Prostate gland (tissue), 2 donors: ENCODE measurements at regions of chr9 and their contacts with region 1.

Region 1: DNA sequence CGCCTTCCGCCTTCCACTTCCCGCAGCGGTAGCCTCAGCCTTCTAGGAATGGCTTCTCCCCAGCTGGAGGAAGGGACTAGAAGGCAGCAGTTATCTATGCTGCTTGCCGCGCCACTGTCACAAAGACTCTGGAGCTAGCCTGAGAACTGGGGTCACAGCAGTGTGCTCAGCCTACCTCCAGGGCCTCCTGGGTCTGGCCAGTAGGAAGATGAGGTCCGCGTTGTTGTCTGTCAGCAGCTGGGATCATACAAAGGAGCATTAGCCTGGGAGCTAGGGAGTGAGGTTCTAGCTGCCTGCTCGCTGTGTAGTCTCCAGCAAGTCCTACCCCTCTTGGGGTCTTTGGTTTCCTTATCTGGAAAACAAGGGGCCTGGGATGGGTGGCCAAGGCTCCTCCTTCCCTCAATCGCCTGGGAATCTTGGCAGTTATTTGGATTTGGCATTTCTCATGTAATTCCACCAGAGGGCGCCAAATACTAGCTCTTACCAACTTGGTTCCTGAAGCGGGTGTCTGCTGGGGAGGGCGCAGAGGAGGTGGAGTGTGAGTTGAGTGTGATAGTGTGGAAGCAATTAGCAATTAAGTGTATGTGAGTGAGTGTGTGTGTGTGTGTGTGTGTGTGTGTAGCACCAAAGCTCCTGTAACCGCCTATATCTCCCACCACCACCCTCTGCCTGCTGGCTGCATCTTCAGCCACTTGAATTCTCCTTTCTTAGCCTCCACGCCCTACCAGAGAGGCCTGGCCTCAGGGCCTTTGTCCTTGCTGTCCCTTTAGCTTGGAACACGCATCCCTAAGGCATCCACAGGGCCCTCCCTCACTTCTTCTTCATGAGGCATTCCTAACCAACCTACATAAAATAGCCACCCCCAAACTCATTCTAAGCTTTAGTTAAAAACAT is 97.1 kb downstream of the ENTREP1 start:
- DNase-seq: peak; percentile 58
- H3K4me3 ChIP-seq: no peak overlapping the region
- H3K27ac ChIP-seq: no peak overlapping the region
- H3K4me1 ChIP-seq: no peaks in the 10 kb centered on the region
- H3K27me3 ChIP-seq: no peaks in the 10 kb centered on the region
- CTCF ChIP-seq: peak; percentile 78 to 91 (median 82)
- POLR2A ChIP-seq: no peak

Region 2: DNA sequence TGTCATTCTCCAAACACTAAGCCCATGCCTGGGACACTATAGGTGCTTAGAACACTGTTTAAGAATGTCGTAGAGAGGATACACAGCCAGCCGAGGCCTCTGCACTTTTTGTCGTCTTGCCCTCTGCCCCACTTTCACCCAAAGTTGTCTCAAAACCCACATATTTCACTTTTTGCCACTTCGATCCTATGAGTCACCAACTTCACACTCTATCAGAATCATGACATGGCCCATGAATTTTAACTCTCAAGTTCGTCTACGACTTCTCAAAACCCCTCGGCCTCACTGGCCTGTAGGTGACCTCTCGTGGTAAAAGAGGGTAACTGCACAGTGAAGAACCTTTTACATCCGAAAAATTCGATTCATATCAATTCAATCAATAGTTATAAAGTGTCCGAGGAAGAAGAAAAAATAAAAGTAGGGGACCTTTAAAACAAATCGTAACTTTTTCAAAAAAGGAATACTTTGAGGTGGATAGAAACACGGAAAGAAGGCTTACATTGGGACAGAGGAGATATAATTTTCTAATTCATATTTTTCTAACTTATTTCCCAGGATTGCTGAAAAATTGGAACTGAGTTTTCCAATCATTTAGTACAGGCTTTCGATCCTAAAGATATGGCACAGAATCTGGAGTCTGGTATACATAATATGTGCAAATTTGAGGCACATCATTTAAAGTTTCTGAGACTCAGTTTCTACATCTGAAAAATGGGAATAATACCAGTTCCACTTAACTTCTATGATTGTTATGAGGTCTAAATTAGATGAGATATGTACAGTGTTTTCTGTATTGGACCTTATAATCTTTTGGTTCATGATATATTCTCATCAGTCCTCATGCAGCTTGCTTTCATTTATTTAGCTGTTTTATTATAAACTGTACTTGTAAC is 127.4 kb after region 1 on chr9:
- intact Hi-C with region 1: loop called (anchors 5 kb)
- DNase-seq: peak; percentile 23
- H3K4me3 ChIP-seq: no peak overlapping the region
- H3K27ac ChIP-seq: no peak overlapping the region
- H3K4me1 ChIP-seq: no peaks in the 10 kb centered on the region
- H3K27me3 ChIP-seq: no peaks in the 10 kb centered on the region
- CTCF ChIP-seq: peak; percentile 50 to 81 (median 76)
- POLR2A ChIP-seq: no peak

Region 3: GRCh38 chr9:69657269-69657668 is 235.1 kb after region 1 on chr9:
- intact Hi-C with region 1: no loop called
- DNase-seq: no peak
- H3K4me3 ChIP-seq: no peak overlapping the region
- H3K27ac ChIP-seq: no peak overlapping the region
- H3K4me1 ChIP-seq: no peaks in the 10 kb centered on the region
- H3K27me3 ChIP-seq: no peaks in the 10 kb centered on the region
- CTCF ChIP-seq: no peak
- POLR2A ChIP-seq: no peak

Region 4: DNA sequence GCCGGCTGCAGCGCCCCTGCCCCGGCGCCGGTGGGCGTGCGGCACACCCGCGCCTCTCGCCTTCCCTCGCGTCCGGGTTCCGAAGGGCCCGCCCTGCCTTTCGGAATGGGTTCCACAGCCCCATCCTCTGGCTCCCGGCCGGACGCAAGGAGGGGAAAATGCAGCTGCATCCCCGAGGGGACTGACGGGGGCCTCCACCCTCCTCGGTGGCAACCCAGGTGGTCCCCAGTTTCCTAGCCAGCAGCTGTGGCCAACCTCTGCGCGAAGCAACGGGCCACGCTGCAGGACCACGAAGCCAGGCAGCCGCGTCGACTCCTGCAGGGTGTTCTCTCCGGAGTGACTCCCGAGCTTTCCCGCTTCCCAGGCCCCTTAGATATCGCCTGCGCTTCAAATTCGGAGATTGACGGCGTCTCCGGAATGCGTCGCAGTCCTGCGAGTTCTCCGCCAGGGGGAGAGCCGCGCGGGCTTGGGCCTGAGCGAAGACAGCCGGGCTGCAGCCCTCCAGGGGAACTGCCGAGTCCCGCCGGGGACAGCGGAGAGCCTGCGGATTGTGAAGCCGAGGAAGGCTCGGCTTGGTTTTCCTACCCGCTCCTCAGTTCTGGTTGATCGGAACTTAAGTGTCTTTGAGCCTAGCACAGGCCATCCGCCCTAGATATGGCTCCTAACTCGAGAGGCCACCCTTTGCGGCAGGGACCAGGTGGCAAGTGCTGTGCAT is 250.6 kb after region 1 on chr9:
- intact Hi-C with region 1: loop called (anchors 10 kb)
- DNase-seq: peak; percentile 74
- H3K4me3 ChIP-seq: peak overlapping the region; percentile 74 to 78
- H3K27ac ChIP-seq: peak overlapping the region; percentile 65 to 80
- H3K4me1 ChIP-seq: peaks cover 4% of the 10 kb centered on the region
- H3K27me3 ChIP-seq: no peaks in the 10 kb centered on the region
- CTCF ChIP-seq: peak; percentile 41 to 87 (median 72)
- POLR2A ChIP-seq: no peak

Region 5: DNA sequence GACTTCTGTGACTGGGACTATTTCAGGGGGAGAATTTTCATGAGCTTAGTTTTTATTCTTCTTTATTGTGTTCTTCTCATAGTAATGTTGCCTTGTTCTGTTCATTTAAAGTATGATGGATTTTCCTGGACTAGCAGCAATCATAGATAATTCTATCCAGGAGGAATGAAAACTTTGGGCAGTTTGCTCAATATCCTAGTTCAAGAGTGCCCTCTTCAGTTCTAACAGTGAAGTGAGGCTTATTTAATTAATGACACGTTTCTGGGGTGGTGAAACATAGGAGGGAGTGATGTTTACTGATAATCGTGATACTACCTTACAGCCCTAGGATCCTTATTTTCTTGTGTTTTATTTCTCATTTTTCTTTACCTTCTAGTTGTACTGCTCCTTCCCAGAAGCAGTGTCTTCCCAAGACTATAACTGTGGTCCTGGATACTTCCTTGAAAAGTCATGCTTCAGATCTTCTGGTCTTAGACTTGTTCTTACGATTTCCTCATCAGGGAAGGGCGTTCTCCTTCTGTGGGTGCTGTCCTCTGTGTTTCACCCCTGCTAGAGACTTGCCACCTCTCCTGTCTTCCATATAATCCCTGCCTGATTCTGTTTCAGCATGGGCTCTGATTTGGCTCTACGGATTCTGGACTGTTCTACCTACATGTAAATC is 455.8 kb after region 1 on chr9:
- intact Hi-C with region 1: loop called (anchors 10 kb)
- DNase-seq: no peak
- H3K4me3 ChIP-seq: no peak overlapping the region
- H3K27ac ChIP-seq: no peak overlapping the region
- H3K4me1 ChIP-seq: no peaks in the 10 kb centered on the region
- H3K27me3 ChIP-seq: no peaks in the 10 kb centered on the region
- CTCF ChIP-seq: peak in 3 of 4 experiments; percentile 28 to 69 (median 61)
- POLR2A ChIP-seq: no peak

Region 6: GRCh38 chr9:69919461-69920061 is 497.4 kb after region 1 on chr9:
- intact Hi-C with region 1: loop called (anchors 10 kb)
- DNase-seq: no peak
- H3K4me3 ChIP-seq: no peak overlapping the region
- H3K27ac ChIP-seq: no peak overlapping the region
- H3K4me1 ChIP-seq: no peaks in the 10 kb centered on the region
- H3K27me3 ChIP-seq: no peaks in the 10 kb centered on the region
- CTCF ChIP-seq: peak; percentile 37 to 59 (median 50)
- POLR2A ChIP-seq: no peak